ENCODE measurements at regions of chr11 and their contacts with region 1.

Region 1: DNA sequence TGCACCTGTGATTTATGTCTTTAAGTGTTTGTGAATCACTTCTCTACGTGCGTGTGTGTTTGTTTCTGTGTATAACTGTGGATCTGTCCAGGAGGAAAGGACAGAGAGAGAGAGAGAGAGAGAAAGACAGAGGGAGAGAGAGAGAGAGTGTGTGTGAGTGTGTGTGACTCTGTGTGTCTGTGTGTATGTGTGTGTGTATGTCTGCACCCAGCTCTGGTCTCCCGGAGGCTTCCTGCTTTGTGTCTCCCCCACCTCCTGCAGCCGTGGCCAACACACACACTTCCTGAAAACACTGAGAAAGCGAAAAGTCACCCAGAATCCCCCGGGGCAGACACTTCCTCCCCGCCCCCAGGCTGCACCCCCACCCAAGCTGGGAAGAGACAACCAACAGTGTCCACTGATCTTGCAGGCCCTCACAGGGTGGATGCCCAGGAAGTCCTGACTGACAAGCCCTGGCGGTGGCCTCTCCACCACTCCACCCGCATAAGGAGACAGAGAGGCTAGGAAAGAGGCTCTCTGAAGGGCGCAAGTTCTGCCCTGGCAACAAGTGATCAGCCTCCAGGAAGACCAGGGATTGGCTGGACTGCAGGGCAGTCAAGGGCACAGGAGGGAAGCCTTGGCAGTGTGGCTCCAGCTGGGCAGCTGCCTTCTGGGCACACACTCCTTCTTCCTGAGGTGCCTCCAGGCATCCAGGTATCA is 30.0 kb downstream of the ARAP1 start:
- DNase-seq: peak; percentile 88 to 93 (median 91)
- H3K4me3 ChIP-seq: peak overlapping the region; percentile 82 to 98
- H3K4me3 Mint-ChIP-seq: peak overlapping the region; percentile 93 to 99 (median 96)
- H3K27ac ChIP-seq: peak overlapping the region; percentile 80
- H3K27ac Mint-ChIP-seq: peak overlapping the region; percentile 93 to 98 (median 96)
- H3K4me1 ChIP-seq: peaks cover 54% of the 10 kb centered on the region
- H3K4me1 Mint-ChIP-seq: peaks cover 46 to 78% (median 60%) of the 10 kb centered on the region in 4 donors
- H3K27me3 ChIP-seq: no peaks in the 10 kb centered on the region
- H3K27me3 Mint-ChIP-seq: peaks cover 0 to 1% of the 10 kb centered on the region in 2 donors

Region 2: DNA sequence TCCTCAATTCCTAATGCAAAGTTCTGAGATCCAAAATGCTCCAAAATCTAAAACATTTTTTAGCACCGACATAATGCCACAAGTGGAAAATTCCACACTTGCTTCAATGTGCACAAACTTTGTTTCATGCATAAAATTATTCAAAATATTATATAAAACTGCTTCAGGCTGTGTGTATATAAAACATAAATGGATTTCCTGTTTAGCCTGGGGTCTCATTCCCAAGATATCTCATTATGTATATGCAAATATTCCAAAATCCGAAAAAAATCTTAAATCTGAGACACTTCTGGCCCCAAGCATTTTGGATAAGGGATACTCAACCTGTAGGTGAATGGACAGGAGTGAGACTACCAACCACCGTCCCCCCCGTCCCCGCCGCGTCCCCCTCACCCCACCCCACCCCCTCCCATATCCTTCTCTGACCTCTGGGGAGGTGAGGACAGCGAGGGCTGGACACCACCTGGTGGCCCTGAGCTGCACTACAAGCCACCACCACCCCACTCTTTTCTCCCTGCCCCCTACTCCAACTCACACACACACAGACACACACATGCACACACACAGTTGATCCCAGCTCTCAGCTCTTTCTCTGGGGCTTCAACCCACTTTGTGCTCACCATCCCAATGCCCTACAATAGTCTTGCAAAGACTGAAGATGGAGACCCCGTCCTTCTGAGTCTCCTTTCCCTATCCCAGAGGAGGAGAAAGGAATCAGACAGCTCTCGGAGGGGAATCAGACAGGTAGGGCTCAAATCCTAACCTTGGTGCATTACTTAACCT is 148.9 kb before region 1 on chr11:
- CTCF ChIA-PET with region 1: no interaction called
- POLR2A ChIA-PET with region 1: no interaction called
- intact Hi-C with region 1: no loop called
- DNase-seq: peak in 3 of 5 donors; percentile 16 to 25 (median 25)
- H3K4me3 ChIP-seq: no peak overlapping the region
- H3K4me3 Mint-ChIP-seq: no peak overlapping the region
- H3K27ac ChIP-seq: no peak overlapping the region
- H3K27ac Mint-ChIP-seq: peak overlapping the region in 1 of 7 donors; percentile 15
- H3K4me1 ChIP-seq: no peaks in the 10 kb centered on the region
- H3K4me1 Mint-ChIP-seq: peaks cover 0 to 11% (median 1%) of the 10 kb centered on the region in 4 donors
- H3K27me3 ChIP-seq: no peaks in the 10 kb centered on the region
- H3K27me3 Mint-ChIP-seq: peaks cover 6 to 10% of the 10 kb centered on the region in 2 donors

Region 3: DNA sequence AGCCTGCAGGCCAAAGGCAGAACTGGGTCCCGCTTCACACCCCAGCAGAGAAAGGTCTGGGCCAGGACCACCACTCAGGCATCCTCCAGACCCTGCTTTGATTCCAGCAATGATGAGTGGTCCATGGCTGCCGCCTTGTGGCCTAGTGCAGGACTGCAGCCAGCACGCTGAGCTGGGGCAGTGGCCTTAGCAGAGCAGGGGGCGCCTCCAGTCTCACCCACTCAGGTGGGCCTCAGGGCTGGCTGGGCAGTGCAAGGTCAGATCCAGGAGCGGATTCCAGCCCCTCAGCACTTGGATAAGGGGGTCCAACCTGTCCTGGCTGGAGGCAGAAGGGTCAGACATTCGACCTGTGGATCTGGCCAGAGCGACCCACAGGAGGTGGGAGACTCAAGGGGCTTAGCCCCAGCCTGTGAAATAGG is 38.4 kb before region 1 on chr11:
- CTCF ChIA-PET with region 1: interaction called, 4 read pairs
- POLR2A ChIA-PET with region 1: interaction called, 4 read pairs
- intact Hi-C with region 1: loop called (anchors 5 kb)
- DNase-seq: peak; percentile 43 to 58 (median 53)
- H3K4me3 ChIP-seq: no peak overlapping the region
- H3K4me3 Mint-ChIP-seq: no peak overlapping the region
- H3K27ac ChIP-seq: no peak overlapping the region
- H3K27ac Mint-ChIP-seq: peak overlapping the region in 2 of 7 donors; percentile 13 to 57
- H3K4me1 ChIP-seq: no peaks in the 10 kb centered on the region
- H3K4me1 Mint-ChIP-seq: peaks cover 11 to 23% (median 15%) of the 10 kb centered on the region in 4 donors
- H3K27me3 ChIP-seq: no peaks in the 10 kb centered on the region
- H3K27me3 Mint-ChIP-seq: no peaks in the 10 kb centered on the region

Region 4: GRCh38 chr11:72752088-72752914 is 30.1 kb after region 1 on chr11 and contains the start of gene ARAP1:
- CTCF ChIA-PET with region 1: interaction called, 11 read pairs
- POLR2A ChIA-PET with region 1: interaction called, 9 read pairs
- intact Hi-C with region 1: loop called (anchors 1 kb)
- DNase-seq: peak; percentile 73 to 85 (median 74)
- H3K4me3 ChIP-seq: peak within 1 kb of the TSS; percentile 78 to 89
- H3K4me3 Mint-ChIP-seq: peak within 1 kb of the TSS; percentile 92 to 99 (median 95)
- H3K27ac ChIP-seq: peak within 1 kb of the TSS; percentile 75
- H3K27ac Mint-ChIP-seq: peak within 1 kb of the TSS; percentile 94 to 98 (median 96)
- H3K4me1 ChIP-seq: peaks cover 50% of the 10 kb centered on the region
- H3K4me1 Mint-ChIP-seq: peaks cover 32 to 55% (median 46%) of the 10 kb centered on the region in 4 donors
- H3K27me3 ChIP-seq: no peaks in the 10 kb centered on the region
- H3K27me3 Mint-ChIP-seq: no peaks in the 10 kb centered on the region
- total RNA-seq, gene ARAP1: 144 to 157 TPM

Region 5: GRCh38 chr11:72793425-72794367 is 71.5 kb after region 1 on chr11 and contains the start of gene STARD10:
- CTCF ChIA-PET with region 1: interaction called, 194 read pairs
- POLR2A ChIA-PET with region 1: interaction called, 45 read pairs
- intact Hi-C with region 1: loop called (anchors 1 kb)
- DNase-seq: peak; percentile 94 to 98 (median 95)
- H3K4me3 ChIP-seq: peak within 1 kb of the TSS; percentile 81 to 96
- H3K4me3 Mint-ChIP-seq: peak within 1 kb of the TSS; percentile 96 to 99 (median 98)
- H3K27ac ChIP-seq: peak within 1 kb of the TSS; percentile 97
- H3K27ac Mint-ChIP-seq: peak within 1 kb of the TSS; percentile 99 to 100 (median 100)
- H3K4me1 ChIP-seq: peaks cover 23% of the 10 kb centered on the region
- H3K4me1 Mint-ChIP-seq: peaks cover 13 to 28% (median 22%) of the 10 kb centered on the region in 4 donors
- H3K27me3 ChIP-seq: no peaks in the 10 kb centered on the region
- H3K27me3 Mint-ChIP-seq: no peaks in the 10 kb centered on the region
- total RNA-seq, gene STARD10: 23.0 to 23.5 TPM

Region 6: DNA sequence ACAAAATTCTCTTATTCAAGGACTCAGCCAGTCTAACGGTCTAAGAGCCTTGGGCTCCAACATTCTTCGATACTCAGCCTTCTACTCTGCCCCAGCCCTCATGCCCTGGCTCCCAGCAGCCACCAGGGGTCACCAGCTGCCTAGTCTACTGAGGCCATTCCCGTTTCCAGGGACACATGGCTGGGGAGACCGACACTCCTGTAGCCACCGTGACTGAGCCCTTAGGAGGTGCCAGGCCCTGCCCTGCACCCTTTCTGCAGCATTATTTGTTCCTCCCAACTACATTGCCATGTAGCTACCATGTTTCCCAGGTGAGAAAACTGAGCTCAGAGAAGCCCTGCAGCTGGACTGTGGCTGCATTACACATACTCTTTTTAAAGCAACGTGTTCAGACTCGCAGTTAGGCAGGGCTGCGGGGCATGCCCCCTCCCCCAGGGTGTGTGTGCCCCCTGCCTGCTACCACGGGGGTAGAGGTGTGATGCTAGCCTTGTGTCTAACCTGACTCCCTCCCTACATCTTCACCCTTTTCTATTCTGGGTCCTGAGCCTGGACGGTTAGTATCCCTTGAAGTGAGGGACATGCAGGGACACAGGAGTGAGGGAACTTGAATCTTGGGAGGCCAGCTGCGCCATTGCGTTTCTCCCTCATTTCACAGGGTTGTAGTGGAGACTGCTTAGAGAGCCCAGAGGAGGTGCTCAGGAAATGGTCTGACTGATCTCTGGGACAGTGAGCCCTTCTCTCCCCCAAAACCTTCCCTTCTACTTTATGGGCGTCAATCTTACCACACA is 109.5 kb after region 1 on chr11:
- CTCF ChIA-PET with region 1: interaction called, 21 read pairs
- POLR2A ChIA-PET with region 1: interaction called, 9 read pairs
- intact Hi-C with region 1: no loop called
- DNase-seq: peak; percentile 40 to 55 (median 44)
- H3K4me3 ChIP-seq: no peak overlapping the region
- H3K4me3 Mint-ChIP-seq: no peak overlapping the region
- H3K27ac ChIP-seq: no peak overlapping the region
- H3K27ac Mint-ChIP-seq: peak overlapping the region; percentile 3 to 79 (median 57)
- H3K4me1 ChIP-seq: no peaks in the 10 kb centered on the region
- H3K4me1 Mint-ChIP-seq: peaks cover 0 to 16% (median 6%) of the 10 kb centered on the region in 4 donors
- H3K27me3 ChIP-seq: no peaks in the 10 kb centered on the region
- H3K27me3 Mint-ChIP-seq: no peaks in the 10 kb centered on the region

Region 7: GRCh38 chr11:72864702-72865655 is 142.8 kb after region 1 on chr11:
- CTCF ChIA-PET with region 1: no interaction called
- POLR2A ChIA-PET with region 1: no interaction called
- intact Hi-C with region 1: no loop called
- DNase-seq: no peak
- H3K4me3 ChIP-seq: no peak overlapping the region
- H3K4me3 Mint-ChIP-seq: no peak overlapping the region
- H3K27ac ChIP-seq: no peak overlapping the region
- H3K27ac Mint-ChIP-seq: peak overlapping the region in 1 of 7 donors; percentile 17
- H3K4me1 ChIP-seq: peaks cover 9% of the 10 kb centered on the region
- H3K4me1 Mint-ChIP-seq: peaks cover 10 to 11% (median 11%) of the 10 kb centered on the region in 4 donors
- H3K27me3 ChIP-seq: no peaks in the 10 kb centered on the region
- H3K27me3 Mint-ChIP-seq: no peaks in the 10 kb centered on the region

Region 8: GRCh38 chr11:72897506-72897905 is 175.3 kb after region 1 on chr11:
- CTCF ChIA-PET with region 1: no interaction called
- POLR2A ChIA-PET with region 1: no interaction called
- intact Hi-C with region 1: no loop called
- DNase-seq: no peak
- H3K4me3 ChIP-seq: no peak overlapping the region
- H3K4me3 Mint-ChIP-seq: no peak overlapping the region
- H3K27ac ChIP-seq: no peak overlapping the region
- H3K27ac Mint-ChIP-seq: no peak overlapping the region
- H3K4me1 ChIP-seq: no peaks in the 10 kb centered on the region
- H3K4me1 Mint-ChIP-seq: no peaks in the 10 kb centered on the region
- H3K27me3 ChIP-seq: no peaks in the 10 kb centered on the region
- H3K27me3 Mint-ChIP-seq: no peaks in the 10 kb centered on the region

Region 9: DNA sequence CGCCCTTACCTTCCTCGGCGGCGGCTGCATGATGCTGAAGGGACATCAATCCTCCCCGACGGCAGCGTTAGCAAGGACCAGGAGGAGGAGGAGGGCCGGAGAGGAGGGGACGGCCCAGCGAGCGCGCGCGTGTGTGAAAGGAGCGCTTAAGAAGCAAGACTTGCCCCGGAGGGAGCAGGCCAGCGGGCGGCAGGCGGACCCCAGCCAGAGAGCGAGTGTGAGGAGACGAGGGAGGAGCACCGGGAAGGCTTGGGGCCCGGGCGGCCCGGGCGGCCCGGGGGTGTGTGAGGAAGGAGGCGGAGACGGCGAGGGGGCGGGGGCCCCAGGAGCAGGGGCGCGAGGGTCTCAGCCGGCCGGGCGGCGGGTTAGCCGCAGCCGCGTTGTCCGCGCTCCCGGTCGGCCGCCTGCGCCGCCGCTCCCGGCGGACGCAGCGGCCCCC is 419.7 kb after region 1 on chr11:
- CTCF ChIA-PET with region 1: interaction called, 5 read pairs
- POLR2A ChIA-PET with region 1: interaction called, 19 read pairs
- intact Hi-C with region 1: loop called (anchors 10 kb)
- DNase-seq: peak in 1 of 5 donors; percentile 78
- H3K4me3 ChIP-seq: peak overlapping the region; percentile 80 to 94
- H3K4me3 Mint-ChIP-seq: peak overlapping the region; percentile 92 to 98 (median 96)
- H3K27ac ChIP-seq: peak overlapping the region; percentile 97
- H3K27ac Mint-ChIP-seq: peak overlapping the region; percentile 84 to 98 (median 95)
- H3K4me1 ChIP-seq: peaks cover 49% of the 10 kb centered on the region
- H3K4me1 Mint-ChIP-seq: peaks cover 30 to 55% (median 39%) of the 10 kb centered on the region in 4 donors
- H3K27me3 ChIP-seq: no peaks in the 10 kb centered on the region
- H3K27me3 Mint-ChIP-seq: no peaks in the 10 kb centered on the region

Region 10: GRCh38 chr11:73876424-73877300 is 1154.5 kb after region 1 on chr11 and contains the starts of genes COA4 and PAAF1:
- CTCF ChIA-PET with region 1: no interaction called
- POLR2A ChIA-PET with region 1: no interaction called
- intact Hi-C with region 1: loop called (anchors 5 kb)
- DNase-seq: peak; percentile 93 to 97 (median 94)
- H3K4me3 ChIP-seq: peak within 1 kb of the TSS; percentile 85 to 90
- H3K4me3 Mint-ChIP-seq: peak within 1 kb of the TSS; percentile 98 to 100 (median 100)
- H3K27ac ChIP-seq: peak within 1 kb of the TSS; percentile 86
- H3K27ac Mint-ChIP-seq: peak within 1 kb of the TSS; percentile 95 to 100 (median 99)
- H3K4me1 ChIP-seq: peaks cover 32% of the 10 kb centered on the region
- H3K4me1 Mint-ChIP-seq: peaks cover 16 to 50% (median 31%) of the 10 kb centered on the region in 4 donors
- H3K27me3 ChIP-seq: no peaks in the 10 kb centered on the region
- H3K27me3 Mint-ChIP-seq: no peaks in the 10 kb centered on the region
- total RNA-seq, gene COA4: 59.0 to 61.4 TPM
- total RNA-seq, gene PAAF1: 18.8 to 19.1 TPM

Measured in CD4-positive, alpha-beta memory T cell (primary cell).